Heart right ventricle (tissue), 16 donors: ENCODE measurements at regions of chr4 and their contacts with region 1.

Region 1: DNA sequence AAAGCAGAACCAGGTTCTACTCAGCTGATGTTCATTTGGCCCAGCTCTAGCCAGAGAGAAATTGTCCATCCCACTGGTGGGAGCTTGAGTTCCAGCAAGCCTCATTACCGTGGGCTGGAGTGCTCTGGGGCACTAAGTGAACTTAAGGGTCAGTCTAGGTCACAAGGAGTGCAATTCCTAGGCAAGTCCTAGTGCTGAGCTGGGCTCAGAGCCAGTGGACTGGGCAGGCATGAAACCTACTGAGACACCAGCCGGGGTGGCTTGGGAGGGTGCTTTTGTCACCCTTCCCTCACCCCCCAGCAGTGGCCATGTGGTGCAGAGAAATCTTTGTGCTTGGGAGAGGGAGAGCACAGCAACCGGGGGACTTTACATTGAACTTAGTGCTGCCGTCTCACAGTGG is 39.4 kb downstream of the GSX2 start:
- DNase-seq: peak in 1 of 2 donors; percentile 35
- ATAC-seq: peak in 5 of 8 donors; percentile 22 to 83 (median 53)
- H3K4me3 ChIP-seq: no peak overlapping the region
- H3K27ac ChIP-seq: no peak overlapping the region
- H3K4me1 ChIP-seq: no peaks in the 10 kb centered on the region
- H3K27me3 ChIP-seq: no peaks in the 10 kb centered on the region
- CTCF ChIP-seq: no peak

Region 2: DNA sequence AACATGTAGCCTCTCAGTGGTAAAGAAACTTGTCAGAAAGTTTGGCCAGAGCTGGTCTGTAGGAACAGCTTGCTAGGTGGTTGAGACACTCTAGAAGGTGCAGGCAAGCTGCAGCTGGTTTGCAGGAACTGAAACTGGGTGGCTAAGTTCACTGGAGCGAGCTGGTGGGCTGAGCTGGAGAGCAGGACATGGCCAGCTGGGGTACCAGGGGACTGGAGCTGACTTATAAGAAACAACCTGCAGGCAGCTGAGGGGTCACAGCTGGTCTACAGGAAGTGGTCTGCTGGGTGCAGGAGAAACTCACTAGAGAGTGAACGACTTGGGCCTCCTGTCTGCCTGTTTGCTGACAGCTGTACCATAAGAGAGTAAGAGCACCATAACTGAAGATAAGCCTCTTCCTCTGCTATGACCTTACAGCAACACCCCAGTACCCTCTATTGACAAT is 391.0 kb before region 1 on chr4:
- intact Hi-C with region 1: no loop called
- DNase-seq: no peak
- ATAC-seq: no peak
- H3K4me3 ChIP-seq: no peak overlapping the region
- H3K27ac ChIP-seq: no peak overlapping the region
- H3K4me1 ChIP-seq: no peaks in the 10 kb centered on the region
- H3K27me3 ChIP-seq: peaks cover 0 to 23% (median 6%) of the 10 kb centered on the region in 7 donors
- CTCF ChIP-seq: no peak

Region 3: DNA sequence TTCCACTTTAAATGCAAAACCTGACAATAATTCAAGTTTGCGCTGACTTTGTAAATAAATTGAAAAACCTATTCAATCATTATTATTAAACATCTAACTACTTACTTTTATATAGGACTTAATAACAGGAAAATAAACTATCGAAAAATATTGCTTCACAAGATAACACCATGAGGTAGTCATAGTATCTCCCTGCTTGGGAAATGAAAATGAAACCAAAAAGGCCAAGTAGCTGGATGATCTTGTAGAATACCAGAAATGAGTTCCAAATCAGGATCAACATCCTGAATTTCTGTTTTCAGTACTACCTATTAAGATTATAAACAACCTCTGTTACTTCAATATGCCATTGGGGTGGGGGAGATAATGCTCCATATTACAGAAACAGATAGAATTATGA is 133.9 kb before region 1 on chr4:
- intact Hi-C with region 1: no loop called
- DNase-seq: no peak
- ATAC-seq: peak in 3 of 8 donors; percentile 53 to 65 (median 56)
- H3K4me3 ChIP-seq: peak overlapping the region in 1 of 10 donors; percentile 2
- H3K27ac ChIP-seq: peak overlapping the region in 3 of 10 donors; percentile 11 to 43 (median 12)
- H3K4me1 ChIP-seq: peaks cover 0 to 16% (median 0%) of the 10 kb centered on the region in 9 donors
- H3K27me3 ChIP-seq: no peaks in the 10 kb centered on the region
- CTCF ChIP-seq: no peak

Region 4: DNA sequence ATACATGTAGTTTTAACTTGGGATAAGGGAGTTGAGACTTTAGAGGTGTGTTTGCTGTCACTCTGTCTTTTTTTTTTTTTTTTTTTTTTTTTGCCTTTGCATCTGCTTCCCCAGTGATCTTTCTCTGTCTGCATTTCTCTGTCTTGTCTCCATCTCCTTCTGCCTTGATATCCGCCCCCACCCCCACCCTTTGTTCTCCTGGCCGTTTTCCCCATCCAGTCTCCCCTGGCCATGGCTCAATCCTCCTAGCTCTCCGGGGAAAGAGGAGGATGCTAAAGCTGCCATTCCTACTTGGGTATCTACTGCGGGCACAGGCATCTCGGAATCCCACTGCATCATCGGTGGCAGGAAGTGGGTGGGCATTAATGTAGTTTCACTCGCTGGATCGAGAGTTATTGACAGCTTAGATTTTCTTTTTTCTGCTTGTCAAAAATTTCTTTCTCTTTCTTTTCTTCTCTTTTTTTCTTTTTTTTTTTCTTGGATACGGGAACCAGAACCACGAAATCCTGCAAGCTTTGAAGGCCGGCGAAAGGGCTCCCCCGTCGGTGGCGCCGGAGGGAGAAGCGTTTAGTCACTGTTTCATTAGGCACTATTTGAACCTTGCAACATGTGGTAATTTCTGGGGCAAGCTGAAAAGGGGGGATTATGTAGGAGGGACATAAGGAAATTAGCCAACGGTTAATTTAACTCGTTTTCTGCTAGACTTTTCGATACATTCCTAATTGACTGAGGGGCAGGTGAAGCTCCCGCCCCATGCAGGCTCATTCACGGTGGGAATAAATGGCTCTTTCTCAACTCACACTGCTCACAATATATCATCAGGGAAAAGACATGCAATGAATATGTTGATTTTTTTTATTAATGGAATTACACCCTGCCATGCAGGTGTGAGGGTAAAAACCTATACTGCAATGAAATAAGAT is 31.1 kb before region 1 on chr4:
- intact Hi-C with region 1: no loop called
- DNase-seq: no peak
- ATAC-seq: no peak
- H3K4me3 ChIP-seq: no peak overlapping the region
- H3K27ac ChIP-seq: no peak overlapping the region
- H3K4me1 ChIP-seq: peaks cover 0 to 33% (median 19%) of the 10 kb centered on the region in 9 donors
- H3K27me3 ChIP-seq: peaks cover 10 to 100% (median 97%) of the 10 kb centered on the region in 7 donors
- CTCF ChIP-seq: no peak

Region 5: DNA sequence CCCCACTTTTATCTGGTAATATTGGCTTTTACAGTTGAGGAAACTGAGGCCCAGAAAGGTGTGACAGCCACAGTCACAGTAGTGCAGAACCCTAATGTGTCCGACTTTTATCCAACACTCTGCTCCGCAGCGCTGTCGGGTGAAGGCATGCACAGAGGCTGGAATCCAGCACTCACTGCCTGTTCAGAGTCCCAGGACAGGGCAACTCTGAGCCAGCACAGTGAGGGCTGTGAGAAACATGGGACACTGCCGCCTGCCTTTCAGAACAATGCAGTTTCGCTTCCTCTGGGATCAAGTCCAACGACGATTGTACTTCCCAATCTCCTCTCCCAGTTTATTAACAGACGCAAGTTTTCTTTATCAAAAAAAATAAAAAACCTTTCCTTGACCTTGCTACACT is 47.8 kb after region 1 on chr4:
- intact Hi-C with region 1: loop called in 1 of 10 experiments (anchors 10 kb)
- DNase-seq: peak in 1 of 2 donors; percentile 39
- ATAC-seq: peak; percentile 55 to 97 (median 86)
- H3K4me3 ChIP-seq: no peak overlapping the region
- H3K27ac ChIP-seq: no peak overlapping the region
- H3K4me1 ChIP-seq: peaks cover 0 to 8% (median 0%) of the 10 kb centered on the region in 9 donors
- H3K27me3 ChIP-seq: no peaks in the 10 kb centered on the region
- CTCF ChIP-seq: peak in 6 of 9 donors; percentile 19 to 50 (median 27)